ENCODE measurements at regions of chr1 and their contacts with region 1.

Region 1: DNA sequence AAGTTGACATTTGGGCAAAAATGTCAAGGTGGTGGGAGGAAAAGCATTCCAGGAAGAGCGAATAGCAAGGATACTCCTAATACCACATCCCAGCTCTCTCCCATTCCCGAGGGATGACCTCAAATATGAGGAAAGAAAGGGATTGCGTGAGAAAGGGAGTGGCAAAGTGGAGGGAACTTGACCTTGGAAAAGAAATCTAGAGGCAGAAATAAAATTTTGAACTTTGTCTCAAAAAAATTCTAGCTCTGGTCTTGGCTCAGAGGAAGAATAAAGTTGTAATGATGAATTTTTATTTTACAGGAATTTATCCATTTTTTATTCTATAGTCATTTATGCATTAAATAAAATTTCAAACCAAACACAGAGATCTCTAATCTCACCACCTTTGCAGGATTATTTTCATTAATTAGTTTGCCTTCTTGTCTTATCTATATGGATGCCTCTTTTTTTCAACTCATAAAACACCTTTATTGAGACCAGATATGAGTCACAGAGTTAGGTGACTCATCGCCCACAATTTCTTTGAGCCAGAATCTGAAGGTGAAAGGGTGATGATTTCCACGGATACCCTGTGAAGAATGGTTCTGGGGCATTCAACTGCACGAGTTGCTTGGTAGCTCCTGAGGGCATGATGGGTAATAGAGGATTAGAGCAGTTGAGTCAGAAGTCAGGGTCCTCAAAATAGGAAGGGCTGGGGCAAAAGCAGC is 128.0 kb downstream of the TBX19 start:
- DNase-seq: peak in 1 of 2 donors; percentile 74
- ATAC-seq: peak; percentile 63 to 76 (median 71)
- H3K4me3 ChIP-seq: no peak overlapping the region
- H3K4me3 Mint-ChIP-seq: peak overlapping the region; percentile 72
- H3K27ac ChIP-seq: peak overlapping the region; percentile 11
- H3K27ac Mint-ChIP-seq: peak overlapping the region; percentile 72 to 87
- H3K4me1 ChIP-seq: peaks cover 30% of the 10 kb centered on the region
- H3K4me1 Mint-ChIP-seq: peaks cover 42 to 50% of the 10 kb centered on the region in 2 donors
- H3K27me3 ChIP-seq: no peaks in the 10 kb centered on the region
- H3K27me3 Mint-ChIP-seq: no peaks in the 10 kb centered on the region
- CTCF ChIP-seq: no peak

Region 2: DNA sequence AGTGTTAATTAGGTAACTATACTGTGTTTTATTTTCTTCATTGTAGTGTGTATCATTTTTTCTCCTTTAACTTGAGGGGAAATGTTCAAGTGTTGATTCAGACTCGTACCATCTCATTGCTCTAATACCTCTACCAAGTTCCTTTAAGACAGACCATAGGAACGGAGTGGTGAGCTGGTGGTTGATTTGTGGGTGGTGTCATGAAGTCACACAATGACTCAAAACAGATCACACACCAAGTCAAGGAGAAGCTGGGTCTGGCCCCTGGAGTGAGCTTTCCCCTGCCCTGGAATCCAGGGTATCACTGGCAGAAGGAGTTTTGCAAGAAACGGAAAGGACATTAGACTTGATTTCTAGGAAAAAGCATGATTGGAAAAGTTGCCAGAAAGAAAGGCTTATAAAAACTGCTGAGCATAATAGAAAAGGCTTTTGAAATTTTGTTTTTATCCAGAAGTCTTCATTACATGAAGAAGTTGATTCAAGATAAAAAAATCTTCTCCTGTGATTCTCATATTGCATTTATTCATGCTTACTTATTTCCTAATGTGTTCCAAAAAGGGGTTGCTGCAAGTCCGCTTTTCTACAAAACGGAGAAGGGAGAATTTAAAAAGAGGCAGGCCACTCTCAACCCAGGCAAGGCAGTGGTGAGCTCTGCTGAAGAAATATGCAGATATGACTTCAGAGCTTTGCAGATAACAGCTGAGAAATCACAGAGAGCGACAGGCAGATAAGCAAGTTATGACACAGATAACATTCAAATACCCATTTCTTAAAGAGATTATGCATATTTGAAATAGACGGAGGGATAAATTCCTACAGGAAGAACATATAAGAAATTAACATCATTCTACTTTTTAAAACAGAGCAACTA is 48.3 kb before region 1 on chr1:
- intact Hi-C with region 1: loop called (anchors 5 kb)
- DNase-seq: peak; percentile 34 to 39
- ATAC-seq: peak; percentile 29 to 40 (median 33)
- H3K4me3 ChIP-seq: no peak overlapping the region
- H3K4me3 Mint-ChIP-seq: peak overlapping the region; percentile 56
- H3K27ac ChIP-seq: no peak overlapping the region
- H3K27ac Mint-ChIP-seq: peak overlapping the region; percentile 88 to 93
- H3K4me1 ChIP-seq: peaks cover 41% of the 10 kb centered on the region
- H3K4me1 Mint-ChIP-seq: peaks cover 54 to 58% of the 10 kb centered on the region in 2 donors
- H3K27me3 ChIP-seq: no peaks in the 10 kb centered on the region
- H3K27me3 Mint-ChIP-seq: no peaks in the 10 kb centered on the region
- CTCF ChIP-seq: no peak

Region 3: DNA sequence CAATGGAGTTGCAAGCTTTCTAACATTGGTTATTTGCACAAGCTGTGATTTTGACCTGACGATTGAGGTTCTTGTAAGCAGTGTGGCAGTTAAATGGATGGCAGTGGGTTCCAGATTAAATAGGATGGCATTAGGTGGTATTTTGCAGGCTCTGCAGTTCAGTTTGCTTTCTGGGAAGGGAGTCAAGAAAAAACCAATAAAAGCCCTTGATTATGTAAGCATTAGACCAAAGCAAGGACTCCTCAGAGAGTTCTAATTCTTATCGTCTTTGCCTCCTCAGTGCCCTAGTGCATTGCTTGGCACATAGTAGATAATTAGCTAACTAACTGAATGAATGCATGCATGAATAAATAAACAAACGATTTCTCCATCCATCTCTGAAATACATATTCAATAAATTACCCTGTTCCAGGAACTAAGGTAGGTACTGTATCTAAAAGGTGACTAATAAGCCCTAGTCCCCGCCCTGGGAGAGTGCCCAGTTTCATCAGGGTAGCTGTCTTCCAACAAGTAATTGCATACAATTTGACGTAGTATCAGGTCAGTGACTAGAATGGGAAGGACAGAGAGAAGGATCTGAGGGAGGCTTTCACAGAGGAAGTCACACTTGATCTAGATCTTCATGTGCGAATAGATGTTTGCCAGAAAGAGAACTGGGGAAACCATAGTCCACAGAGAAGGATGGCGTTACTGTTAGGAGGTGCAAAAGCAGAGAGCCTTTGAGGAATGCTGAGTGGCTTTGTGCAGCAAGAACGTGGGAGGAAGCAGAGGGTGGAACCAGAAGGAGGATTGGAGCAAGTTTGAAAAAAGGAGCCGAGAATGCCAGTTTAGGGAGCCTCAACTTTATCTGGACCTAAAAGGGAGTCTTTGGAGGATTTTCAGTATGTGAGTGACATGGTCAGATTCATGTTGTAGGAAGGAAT is 16.7 kb before region 1 on chr1:
- intact Hi-C with region 1: loop called (anchors 2 kb)
- DNase-seq: peak; percentile 25 to 53
- ATAC-seq: peak; percentile 75 to 86 (median 82)
- H3K4me3 ChIP-seq: no peak overlapping the region
- H3K4me3 Mint-ChIP-seq: peak overlapping the region; percentile 86
- H3K27ac ChIP-seq: peak overlapping the region; percentile 42
- H3K27ac Mint-ChIP-seq: peak overlapping the region; percentile 3 to 79
- H3K4me1 ChIP-seq: peaks cover 39% of the 10 kb centered on the region
- H3K4me1 Mint-ChIP-seq: peaks cover 64 to 71% of the 10 kb centered on the region in 2 donors
- H3K27me3 ChIP-seq: no peaks in the 10 kb centered on the region
- H3K27me3 Mint-ChIP-seq: peaks cover 0 to 5% of the 10 kb centered on the region in 2 donors
- CTCF ChIP-seq: no peak

Measured in natural killer cell (primary cell).